ENCODE measurements at regions of chr19 and their contacts with region 1.

Region 1: GRCh38 chr19:35213663-35214632 is 14.6 kb downstream of the FAM187B start:
- DNase-seq: peak; percentile 60 to 97 (median 80)
- ATAC-seq: peak; percentile 34
- H3K4me3 ChIP-seq: no peak overlapping the region
- H3K4me3 Mint-ChIP-seq: peak overlapping the region; percentile 65
- H3K27ac ChIP-seq: peak overlapping the region; percentile 96 to 97
- H3K27ac Mint-ChIP-seq: peak overlapping the region; percentile 100
- H3K4me1 ChIP-seq: peaks cover 56% of the 10 kb centered on the region
- H3K4me1 Mint-ChIP-seq: peaks cover 64% of the 10 kb centered on the region
- H3K27me3 ChIP-seq: no peaks in the 10 kb centered on the region
- H3K27me3 Mint-ChIP-seq: no peaks in the 10 kb centered on the region
- CTCF ChIP-seq: no peak

Region 2: DNA sequence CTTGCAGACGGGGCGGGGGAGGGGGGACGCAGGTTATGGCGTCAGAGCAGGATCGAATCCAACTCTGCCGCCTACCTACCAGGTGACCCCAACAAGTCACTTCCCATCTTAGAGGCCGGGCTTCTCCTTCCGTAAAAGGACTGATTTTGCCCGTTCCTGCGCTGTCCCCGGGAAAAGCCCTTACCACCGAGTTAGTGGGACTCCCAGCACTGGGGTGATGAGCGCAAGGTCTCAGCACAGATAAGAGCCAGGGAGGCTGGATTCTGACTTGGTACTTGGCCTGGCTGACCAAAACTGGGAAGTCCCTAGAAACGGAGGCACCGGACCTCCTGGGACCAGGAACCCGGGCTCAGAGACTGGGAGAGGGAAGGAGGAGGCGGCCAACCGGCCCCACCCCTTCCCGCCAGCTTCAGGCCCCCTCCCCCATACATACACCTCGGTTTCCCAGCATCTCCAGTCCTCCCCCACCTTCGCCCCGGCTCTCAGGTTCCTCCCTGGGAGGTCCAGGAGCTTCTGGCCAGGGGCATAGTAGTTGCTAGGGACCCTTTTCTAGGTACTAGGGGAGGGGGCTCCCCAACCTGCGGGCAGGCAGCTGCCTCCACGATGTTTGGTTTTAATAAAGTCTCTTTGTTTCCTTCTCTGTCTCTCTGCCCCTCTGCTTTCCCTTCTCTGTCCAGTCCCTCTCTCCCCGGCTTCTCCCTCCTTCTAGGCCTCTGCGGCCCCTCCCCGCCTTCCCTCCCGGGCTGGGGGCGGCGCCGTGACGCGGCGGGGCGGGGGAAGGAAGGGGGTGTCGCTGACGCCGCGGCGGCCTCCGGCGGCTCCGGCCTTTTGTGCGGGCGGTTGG is 214.2 kb before region 1 on chr19 and contains the start of gene GRAMD1A:
- CTCF ChIA-PET with region 1: no interaction called
- POLR2A ChIA-PET with region 1: interaction called, 3 read pairs
- intact Hi-C with region 1: loop called in 1 of 2 experiments (anchors 5 kb)
- DNase-seq: peak; percentile 33 to 85 (median 70)
- ATAC-seq: peak; percentile 37
- H3K4me3 ChIP-seq: peak within 1 kb of the TSS; percentile 64 to 71
- H3K4me3 Mint-ChIP-seq: peak within 1 kb of the TSS; percentile 97
- H3K27ac ChIP-seq: peak within 1 kb of the TSS; percentile 86 to 89
- H3K27ac Mint-ChIP-seq: peak within 1 kb of the TSS; percentile 98
- H3K4me1 ChIP-seq: peaks cover 79% of the 10 kb centered on the region
- H3K4me1 Mint-ChIP-seq: peaks cover 64% of the 10 kb centered on the region
- H3K27me3 ChIP-seq: no peaks in the 10 kb centered on the region
- H3K27me3 Mint-ChIP-seq: no peaks in the 10 kb centered on the region
- CTCF ChIP-seq: no peak
- total RNA-seq, gene GRAMD1A: 207 to 221 TPM

Region 3: DNA sequence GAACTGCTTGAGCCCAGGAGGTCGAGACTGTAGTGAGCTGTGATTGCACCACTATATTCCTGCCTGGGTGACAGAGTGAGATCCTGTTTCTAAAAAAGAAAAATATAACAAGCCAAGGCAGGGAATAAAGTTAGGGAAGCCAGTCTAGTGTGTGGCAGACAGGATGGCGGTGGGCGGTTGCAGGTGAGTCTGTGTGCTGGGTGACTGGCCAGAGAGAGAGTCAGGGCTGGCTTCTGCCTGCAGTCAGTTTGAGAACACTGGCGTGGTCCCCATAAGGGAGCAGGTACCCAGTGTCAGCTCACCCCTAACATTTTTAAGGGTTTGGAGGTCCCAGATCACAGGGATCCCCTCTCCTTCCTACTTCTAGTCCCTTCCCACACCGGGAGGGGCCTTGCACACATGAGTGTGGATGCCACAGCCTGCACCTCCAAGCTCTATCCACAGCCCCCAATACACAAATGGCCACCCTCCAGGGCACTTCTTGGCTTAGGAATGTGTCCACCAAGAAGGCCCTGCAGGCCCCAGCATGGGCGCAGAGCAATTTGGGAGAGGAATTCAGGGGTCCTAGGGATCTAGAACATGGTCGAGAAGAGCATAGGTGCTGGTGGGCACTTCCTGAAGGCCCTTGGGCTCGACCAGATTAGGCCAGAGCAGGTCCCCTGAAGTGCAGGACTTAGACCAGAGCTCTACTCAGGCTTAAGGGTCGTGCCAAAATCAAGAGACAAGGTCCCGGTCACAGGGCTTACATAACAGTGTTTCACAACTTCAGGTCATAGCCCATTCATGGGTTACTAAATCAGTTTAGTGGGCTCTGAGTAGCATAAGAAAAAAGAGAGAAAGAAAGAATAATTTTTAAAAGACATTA is 43.6 kb before region 1 on chr19:
- CTCF ChIA-PET with region 1: no interaction called
- POLR2A ChIA-PET with region 1: interaction called, 10 read pairs
- intact Hi-C with region 1: loop called in 1 of 2 experiments (anchors 5 kb)
- DNase-seq: no peak
- ATAC-seq: no peak
- H3K4me3 ChIP-seq: no peak overlapping the region
- H3K4me3 Mint-ChIP-seq: no peak overlapping the region
- H3K27ac ChIP-seq: no peak overlapping the region
- H3K27ac Mint-ChIP-seq: peak overlapping the region; percentile 57
- H3K4me1 ChIP-seq: peaks cover 48% of the 10 kb centered on the region
- H3K4me1 Mint-ChIP-seq: peaks cover 49% of the 10 kb centered on the region
- H3K27me3 ChIP-seq: no peaks in the 10 kb centered on the region
- H3K27me3 Mint-ChIP-seq: no peaks in the 10 kb centered on the region
- CTCF ChIP-seq: no peak

Region 4: DNA sequence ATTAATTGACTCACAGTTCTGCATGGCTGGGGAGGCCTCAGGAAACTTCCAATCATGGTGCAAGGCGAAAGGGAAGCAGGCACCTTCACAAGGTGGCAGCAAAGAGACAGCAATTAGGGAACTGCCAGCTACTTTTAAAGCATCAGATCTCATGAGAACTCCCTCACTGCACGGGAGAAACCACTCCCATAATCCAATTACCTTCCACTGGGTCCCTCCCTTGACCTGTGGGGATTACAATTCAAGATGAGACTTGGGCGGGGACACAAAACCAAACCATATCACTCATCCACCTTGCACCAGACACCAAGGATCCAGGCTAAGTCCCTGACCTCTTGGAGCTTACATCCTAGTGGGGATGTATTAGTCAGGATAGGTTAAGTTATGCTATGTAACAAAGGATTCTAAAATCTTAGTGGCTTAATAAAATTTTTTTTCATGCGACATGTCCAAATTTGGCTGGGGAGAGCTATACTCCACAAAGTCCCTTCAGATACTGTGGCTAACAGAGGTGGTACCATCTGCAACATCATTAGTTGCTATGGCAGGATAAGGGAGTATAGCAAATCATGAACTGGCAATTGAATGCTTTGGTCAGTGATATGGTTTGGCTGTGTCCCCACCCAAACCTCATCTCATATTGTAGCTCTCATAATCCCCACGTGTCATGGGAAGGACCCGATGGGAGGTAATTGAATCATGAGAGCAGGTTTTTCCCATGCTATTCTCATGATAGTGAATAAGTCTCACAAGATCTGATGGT is 22.9 kb after region 1 on chr19:
- CTCF ChIA-PET with region 1: interaction called, 12 read pairs
- POLR2A ChIA-PET with region 1: interaction called, 20 read pairs
- intact Hi-C with region 1: loop called in 1 of 2 experiments (anchors 1 kb)
- DNase-seq: peak in 4 of 9 experiments; percentile 38 to 59 (median 50)
- ATAC-seq: no peak
- H3K4me3 ChIP-seq: no peak overlapping the region
- H3K4me3 Mint-ChIP-seq: no peak overlapping the region
- H3K27ac ChIP-seq: no peak overlapping the region
- H3K27ac Mint-ChIP-seq: peak overlapping the region; percentile 32
- H3K4me1 ChIP-seq: peaks cover 24% of the 10 kb centered on the region
- H3K4me1 Mint-ChIP-seq: peaks cover 29% of the 10 kb centered on the region
- H3K27me3 ChIP-seq: no peaks in the 10 kb centered on the region
- H3K27me3 Mint-ChIP-seq: no peaks in the 10 kb centered on the region
- CTCF ChIP-seq: no peak

Region 5: DNA sequence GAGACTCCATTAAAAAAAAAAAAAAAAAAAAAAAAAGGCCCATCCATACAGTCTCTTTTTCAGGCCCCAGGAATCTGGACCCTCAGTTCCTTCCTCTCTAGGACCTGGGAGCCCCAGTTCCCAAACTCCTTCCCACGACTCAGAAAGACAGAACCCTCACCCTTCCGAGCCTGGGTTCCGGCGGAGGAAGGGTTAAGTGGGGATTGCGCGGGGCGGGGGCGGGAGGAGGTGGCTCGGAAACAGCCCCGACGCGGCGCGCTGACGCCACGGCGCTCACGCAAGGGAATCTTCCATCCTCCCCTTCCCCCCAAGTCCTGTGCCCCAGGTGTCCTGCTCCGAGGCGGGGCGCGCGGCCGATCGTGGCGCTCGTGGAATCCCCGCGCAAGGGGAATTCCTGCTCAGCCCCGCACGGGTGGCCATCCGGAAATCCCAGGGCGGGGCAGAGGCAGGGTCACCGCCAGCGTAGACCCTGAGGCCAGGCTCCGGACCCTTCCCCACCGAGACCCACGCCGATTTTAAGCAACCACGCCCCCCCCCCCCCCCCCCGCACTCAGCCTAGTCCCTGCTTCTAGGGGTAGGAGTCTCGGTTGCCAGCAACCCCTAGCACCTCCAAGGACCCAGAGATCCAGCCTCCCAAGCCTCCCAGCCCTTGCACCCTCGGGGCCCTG is 685.7 kb after region 1 on chr19:
- CTCF ChIA-PET with region 1: no interaction called
- POLR2A ChIA-PET with region 1: no interaction called
- intact Hi-C with region 1: loop called (anchors 5 to 10 kb)
- DNase-seq: peak; percentile 68 to 97 (median 87)
- ATAC-seq: peak; percentile 59
- H3K4me3 ChIP-seq: peak overlapping the region; percentile 95 to 97
- H3K4me3 Mint-ChIP-seq: peak overlapping the region; percentile 100
- H3K27ac ChIP-seq: peak overlapping the region; percentile 85 to 99
- H3K27ac Mint-ChIP-seq: peak overlapping the region; percentile 95
- H3K4me1 ChIP-seq: peaks cover 45% of the 10 kb centered on the region
- H3K4me1 Mint-ChIP-seq: peaks cover 57% of the 10 kb centered on the region
- H3K27me3 ChIP-seq: no peaks in the 10 kb centered on the region
- H3K27me3 Mint-ChIP-seq: no peaks in the 10 kb centered on the region
- CTCF ChIP-seq: no peak

Measured in CD8-positive, alpha-beta T cell (primary cell).